Esophagus muscularis mucosa (tissue), 4 donors: ENCODE measurements at regions of chr17 and their contacts with region 1.

Region 1: GRCh38 chr17:58637011-58637570 is 54.8 kb downstream of the TEX14 start:
- DNase-seq: no peak
- H3K4me3 ChIP-seq: no peak overlapping the region
- H3K27ac ChIP-seq: no peak overlapping the region
- H3K4me1 ChIP-seq: peaks cover 3 to 5% (median 4%) of the 10 kb centered on the region in 4 donors
- H3K27me3 ChIP-seq: no peaks in the 10 kb centered on the region
- CTCF ChIP-seq: no peak
- EP300 ChIP-seq: no peak
- POLR2A ChIP-seq: no peak

Region 2: GRCh38 chr17:58565780-58566189 is 71.3 kb before region 1 on chr17:
- intact Hi-C with region 1: no loop called
- DNase-seq: no peak
- H3K4me3 ChIP-seq: no peak overlapping the region
- H3K27ac ChIP-seq: no peak overlapping the region
- H3K4me1 ChIP-seq: no peaks in the 10 kb centered on the region
- H3K27me3 ChIP-seq: no peaks in the 10 kb centered on the region
- CTCF ChIP-seq: no peak
- EP300 ChIP-seq: no peak
- POLR2A ChIP-seq: no peak

Region 3: DNA sequence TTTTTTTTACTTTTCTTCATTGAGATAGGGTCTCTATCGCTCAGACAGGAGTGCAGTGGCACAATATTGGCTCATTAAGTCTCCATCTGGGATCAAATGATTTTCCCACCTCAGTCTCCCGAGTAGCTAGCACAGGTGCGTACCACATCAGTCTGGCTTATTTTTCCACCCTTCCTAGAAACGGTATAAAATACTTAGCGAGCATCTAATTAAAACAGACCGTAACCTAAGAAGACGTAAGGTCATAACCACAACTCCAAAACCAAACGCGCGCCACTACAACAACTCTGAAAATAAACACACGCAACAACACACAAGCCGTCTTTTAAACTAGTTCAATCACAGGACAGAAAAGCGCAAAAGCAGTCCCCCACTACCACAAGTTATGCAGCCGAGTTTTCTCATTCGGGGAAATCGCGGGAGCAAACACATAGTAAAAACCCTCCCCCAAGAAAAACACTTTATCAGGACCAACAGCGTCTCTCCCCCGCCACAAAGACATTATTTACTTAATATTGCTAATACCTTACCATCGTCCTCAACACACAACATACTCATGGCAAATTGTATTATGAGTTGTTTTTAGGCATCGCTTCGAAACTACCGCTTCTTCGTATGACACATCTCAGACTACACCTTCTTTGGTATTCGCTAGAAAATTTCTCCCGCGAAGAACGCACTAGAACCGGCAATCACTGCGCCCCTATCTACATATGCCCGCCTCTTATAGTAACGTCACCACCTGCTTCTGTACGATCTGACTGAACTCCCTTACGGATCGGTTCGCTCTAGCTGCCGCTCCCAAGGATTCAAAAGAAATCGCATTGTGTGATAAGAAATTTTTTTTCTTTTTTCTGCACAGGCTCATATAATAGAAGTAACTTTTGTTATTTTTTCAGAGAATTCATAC is 22.0 kb after region 1 on chr17:
- intact Hi-C with region 1: loop called (anchors 2 kb)
- DNase-seq: peak; percentile 94
- H3K4me3 ChIP-seq: peak overlapping the region; percentile 47 to 55 (median 52)
- H3K27ac ChIP-seq: peak overlapping the region; percentile 71 to 84 (median 76)
- H3K4me1 ChIP-seq: peaks cover 0 to 8% (median 6%) of the 10 kb centered on the region in 4 donors
- H3K27me3 ChIP-seq: no peaks in the 10 kb centered on the region
- CTCF ChIP-seq: no peak
- EP300 ChIP-seq: no peak
- POLR2A ChIP-seq: peak; percentile 95

Region 4: GRCh38 chr17:58947824-58948223 is 310.7 kb after region 1 on chr17:
- intact Hi-C with region 1: no loop called
- DNase-seq: no peak
- H3K4me3 ChIP-seq: no peak overlapping the region
- H3K27ac ChIP-seq: no peak overlapping the region
- H3K4me1 ChIP-seq: no peaks in the 10 kb centered on the region
- H3K27me3 ChIP-seq: no peaks in the 10 kb centered on the region
- CTCF ChIP-seq: no peak
- EP300 ChIP-seq: no peak
- POLR2A ChIP-seq: no peak